ENCODE measurements at regions of chr15 and their contacts with region 1.

Region 1: DNA sequence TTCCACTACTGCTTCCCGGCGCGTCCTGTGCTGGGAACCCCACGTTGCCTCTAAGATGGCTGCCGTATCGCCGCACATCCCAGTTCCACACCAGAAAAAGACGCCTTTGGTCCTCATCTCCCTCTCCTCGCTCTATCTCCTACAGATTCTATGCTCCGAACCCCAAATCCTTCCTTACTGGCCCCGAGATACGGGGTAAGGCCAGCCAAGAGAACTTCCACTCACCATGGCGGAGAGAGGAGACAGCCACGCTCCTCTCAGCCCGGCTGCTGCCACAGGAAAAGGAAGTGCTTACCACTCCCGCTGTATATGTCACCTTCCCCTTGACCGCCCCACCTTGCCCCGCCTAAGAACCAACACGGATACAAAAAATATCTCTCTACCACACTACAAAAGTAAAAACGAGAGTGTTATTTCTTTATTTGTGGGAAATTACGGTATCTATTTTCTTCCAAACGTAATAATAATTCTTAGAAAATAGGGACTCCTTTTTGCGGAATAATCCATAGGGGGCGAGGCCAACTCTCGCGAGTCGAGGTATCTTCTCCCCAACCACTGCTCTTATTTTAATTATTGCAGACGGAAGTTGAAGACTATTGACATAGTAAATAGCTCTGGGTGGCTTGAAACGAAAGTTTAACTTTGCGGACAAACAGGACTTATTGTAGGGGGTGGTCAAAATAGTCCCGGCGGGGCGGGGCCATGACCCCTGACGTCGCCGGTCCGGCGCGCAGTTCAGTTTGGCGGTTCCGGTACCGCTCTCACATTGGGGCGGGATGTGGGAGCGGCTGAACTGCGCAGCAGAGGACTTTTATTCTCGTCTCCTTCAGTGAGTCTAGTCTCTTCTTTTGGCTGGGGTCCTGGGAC is at the starts of genes RPL4 and ZWILCH:
- DNase-seq: peak; percentile 93
- ATAC-seq: peak; percentile 85
- H3K4me3 ChIP-seq: peak within 1 kb of the TSS; percentile 81 to 99 (median 85)
- H3K4me3 Mint-ChIP-seq: peak within 1 kb of the TSS; percentile 99
- H3K27ac ChIP-seq: peak within 1 kb of the TSS; percentile 83 to 90
- H3K27ac Mint-ChIP-seq: peak within 1 kb of the TSS; percentile 98
- H3K4me1 ChIP-seq: peaks cover 21 to 26% of the 10 kb centered on the region in 2 donors
- H3K4me1 Mint-ChIP-seq: peaks cover 42% of the 10 kb centered on the region
- H3K27me3 ChIP-seq: no peaks in the 10 kb centered on the region
- H3K27me3 Mint-ChIP-seq: no peaks in the 10 kb centered on the region
- CTCF ChIP-seq: no peak
- total RNA-seq, gene RPL4: 2,389 and 2,546 TPM in 2 replicates
- total RNA-seq, gene ZWILCH: 11.3 and 12.6 TPM in 2 replicates

Region 2: GRCh38 chr15:66293419-66294156 is 211.2 kb before region 1 on chr15 and contains the start of gene DIS3L:
- CTCF ChIA-PET with region 1: interaction called, 5 read pairs
- POLR2A ChIA-PET with region 1: interaction called, 3 read pairs
- intact Hi-C with region 1: loop called (anchors 2 kb)
- DNase-seq: peak; percentile 84
- ATAC-seq: peak; percentile 80
- H3K4me3 ChIP-seq: peak within 1 kb of the TSS; percentile 50 to 90 (median 61)
- H3K4me3 Mint-ChIP-seq: peak within 1 kb of the TSS; percentile 89
- H3K27ac ChIP-seq: peak within 1 kb of the TSS; percentile 92 to 93
- H3K27ac Mint-ChIP-seq: peak within 1 kb of the TSS; percentile 93
- H3K4me1 ChIP-seq: peaks cover 20 to 26% of the 10 kb centered on the region in 2 donors
- H3K4me1 Mint-ChIP-seq: peaks cover 31% of the 10 kb centered on the region
- H3K27me3 ChIP-seq: no peaks in the 10 kb centered on the region
- H3K27me3 Mint-ChIP-seq: no peaks in the 10 kb centered on the region
- CTCF ChIP-seq: no peak
- total RNA-seq, gene DIS3L: 39.4 and 43.9 TPM in 2 replicates

Region 3: DNA sequence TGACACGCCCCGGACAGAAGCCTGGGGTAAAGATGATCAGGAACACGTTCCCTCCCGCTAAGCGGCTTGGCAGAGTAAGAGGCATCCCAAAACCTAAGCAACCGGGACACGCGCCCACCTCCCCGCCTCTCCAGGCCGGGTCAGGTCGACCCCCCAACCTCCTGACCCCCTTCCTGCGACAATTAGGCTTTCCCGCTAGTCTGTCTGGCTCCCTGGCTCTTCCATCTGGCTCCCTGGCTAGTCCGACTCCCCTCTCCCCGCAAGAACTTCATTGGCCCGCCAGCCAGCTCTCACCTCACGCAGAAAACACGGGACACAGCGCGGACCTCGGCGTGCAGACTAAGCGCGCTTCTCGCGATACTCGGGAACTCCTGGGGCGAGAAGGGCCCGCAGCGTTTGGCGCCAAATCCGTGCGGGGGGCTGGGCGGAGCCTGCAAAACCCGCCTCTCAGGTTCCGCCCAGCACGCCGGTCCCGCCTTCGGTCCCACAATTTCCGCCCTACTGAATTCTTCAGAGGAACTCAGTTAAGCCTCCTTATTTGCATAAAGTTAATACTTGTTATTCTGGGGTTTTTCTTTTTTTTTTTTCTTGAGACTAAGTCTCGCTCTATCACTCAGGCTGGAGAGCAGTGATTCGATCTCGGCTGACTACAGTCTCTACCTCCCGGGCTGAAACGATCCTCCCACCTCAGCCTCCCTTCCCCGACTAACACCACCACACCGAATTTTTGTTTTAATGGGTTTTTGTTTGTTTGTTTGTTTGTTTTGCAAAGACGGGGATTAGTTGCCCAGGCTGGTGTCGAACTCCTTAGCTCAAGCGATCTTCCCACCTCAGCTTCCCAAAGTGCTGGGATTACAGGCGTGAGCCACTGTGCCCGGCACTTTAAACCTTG is 148.2 kb before region 1 on chr15 and contains the start of gene TIPIN:
- CTCF ChIA-PET with region 1: no interaction called
- POLR2A ChIA-PET with region 1: interaction called, 3 read pairs
- intact Hi-C with region 1: loop called (anchors 1 kb)
- DNase-seq: peak; percentile 98
- ATAC-seq: peak; percentile 95
- H3K4me3 ChIP-seq: peak within 1 kb of the TSS; percentile 35 to 89 (median 84)
- H3K4me3 Mint-ChIP-seq: peak within 1 kb of the TSS; percentile 91
- H3K27ac ChIP-seq: peak within 1 kb of the TSS; percentile 58 to 71
- H3K27ac Mint-ChIP-seq: peak within 1 kb of the TSS; percentile 83
- H3K4me1 ChIP-seq: peaks cover 11 to 28% of the 10 kb centered on the region in 2 donors
- H3K4me1 Mint-ChIP-seq: peaks cover 24% of the 10 kb centered on the region
- H3K27me3 ChIP-seq: no peaks in the 10 kb centered on the region
- H3K27me3 Mint-ChIP-seq: no peaks in the 10 kb centered on the region
- CTCF ChIP-seq: no peak
- total RNA-seq, gene TIPIN: 8.8 and 8.9 TPM in 2 replicates

Region 4: GRCh38 chr15:66386204-66387123 is 118.3 kb before region 1 on chr15 and contains the start of gene MAP2K1:
- CTCF ChIA-PET with region 1: interaction called, 89 read pairs
- POLR2A ChIA-PET with region 1: no interaction called
- intact Hi-C with region 1: loop called (anchors 1 kb)
- DNase-seq: peak; percentile 98
- ATAC-seq: peak; percentile 91
- H3K4me3 ChIP-seq: peak within 1 kb of the TSS; percentile 59 to 78 (median 75)
- H3K4me3 Mint-ChIP-seq: peak within 1 kb of the TSS; percentile 92
- H3K27ac ChIP-seq: peak within 1 kb of the TSS; percentile 61 to 78
- H3K27ac Mint-ChIP-seq: peak within 1 kb of the TSS; percentile 94
- H3K4me1 ChIP-seq: peaks cover 47 to 50% of the 10 kb centered on the region in 2 donors
- H3K4me1 Mint-ChIP-seq: peaks cover 46% of the 10 kb centered on the region
- H3K27me3 ChIP-seq: no peaks in the 10 kb centered on the region
- H3K27me3 Mint-ChIP-seq: no peaks in the 10 kb centered on the region
- CTCF ChIP-seq: peak; percentile 80
- total RNA-seq, gene MAP2K1: 50.3 and 52.3 TPM in 2 replicates

Region 5: GRCh38 chr15:66459818-66460615 is 44.8 kb before region 1 on chr15:
- CTCF ChIA-PET with region 1: no interaction called
- POLR2A ChIA-PET with region 1: no interaction called
- intact Hi-C with region 1: no loop called
- DNase-seq: no peak
- ATAC-seq: no peak
- H3K4me3 ChIP-seq: no peak overlapping the region
- H3K4me3 Mint-ChIP-seq: no peak overlapping the region
- H3K27ac ChIP-seq: no peak overlapping the region
- H3K27ac Mint-ChIP-seq: no peak overlapping the region
- H3K4me1 ChIP-seq: no peaks in the 10 kb centered on the region
- H3K4me1 Mint-ChIP-seq: peaks cover 15% of the 10 kb centered on the region
- H3K27me3 ChIP-seq: no peaks in the 10 kb centered on the region
- H3K27me3 Mint-ChIP-seq: no peaks in the 10 kb centered on the region
- CTCF ChIP-seq: no peak

Region 6: GRCh38 chr15:66535016-66535415 is 30.2 kb after region 1 on chr15:
- CTCF ChIA-PET with region 1: no interaction called
- POLR2A ChIA-PET with region 1: no interaction called
- intact Hi-C with region 1: no loop called
- DNase-seq: no peak
- ATAC-seq: no peak
- H3K4me3 ChIP-seq: no peak overlapping the region
- H3K4me3 Mint-ChIP-seq: no peak overlapping the region
- H3K27ac ChIP-seq: no peak overlapping the region
- H3K27ac Mint-ChIP-seq: no peak overlapping the region
- H3K4me1 ChIP-seq: no peaks in the 10 kb centered on the region
- H3K4me1 Mint-ChIP-seq: no peaks in the 10 kb centered on the region
- H3K27me3 ChIP-seq: no peaks in the 10 kb centered on the region
- H3K27me3 Mint-ChIP-seq: no peaks in the 10 kb centered on the region
- CTCF ChIP-seq: no peak

Region 7: DNA sequence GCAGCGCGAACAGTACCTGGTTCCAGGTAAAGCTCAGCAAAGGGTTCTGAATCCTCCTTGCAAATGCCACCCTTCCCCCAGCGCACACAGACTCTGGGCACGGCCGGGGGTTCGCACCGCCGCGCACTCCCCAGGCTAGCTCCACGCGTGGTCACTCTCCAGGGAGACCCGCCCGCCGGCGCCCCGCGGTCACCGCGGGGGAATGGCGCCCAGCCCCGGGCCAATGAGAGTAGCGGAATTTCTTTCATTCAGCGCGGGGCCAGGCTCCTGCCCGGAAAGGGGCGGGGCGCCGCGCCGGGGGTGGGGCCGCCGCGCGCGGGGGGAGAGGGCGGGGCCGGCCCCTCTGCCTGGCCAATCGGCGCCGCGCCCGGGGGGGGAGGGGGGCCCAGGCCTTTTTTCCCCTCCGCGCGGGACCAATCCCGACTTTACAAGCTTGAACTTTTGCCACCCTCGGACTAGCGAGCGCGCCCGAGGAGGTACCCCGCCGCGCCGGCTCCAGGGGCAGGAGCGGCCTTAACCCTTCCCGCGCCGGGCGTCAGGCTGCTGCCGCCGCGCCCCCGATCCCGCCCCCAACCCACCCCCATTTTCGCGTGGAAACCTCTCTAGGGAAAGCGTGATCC is 196.1 kb after region 1 on chr15:
- CTCF ChIA-PET with region 1: no interaction called
- POLR2A ChIA-PET with region 1: no interaction called
- intact Hi-C with region 1: loop called (anchors 2 kb)
- DNase-seq: peak; percentile 88
- ATAC-seq: peak; percentile 84
- H3K4me3 ChIP-seq: peak overlapping the region; percentile 63 to 80 (median 77)
- H3K4me3 Mint-ChIP-seq: peak overlapping the region; percentile 94
- H3K27ac ChIP-seq: peak overlapping the region in 1 of 2 donors; percentile 47
- H3K27ac Mint-ChIP-seq: peak overlapping the region; percentile 85
- H3K4me1 ChIP-seq: peaks cover 17 to 27% of the 10 kb centered on the region in 2 donors
- H3K4me1 Mint-ChIP-seq: peaks cover 19% of the 10 kb centered on the region
- H3K27me3 ChIP-seq: peaks cover 0 to 34% (median 7%) of the 10 kb centered on the region in 4 experiments
- H3K27me3 Mint-ChIP-seq: peaks cover 17% of the 10 kb centered on the region
- CTCF ChIP-seq: no peak

Region 8: GRCh38 chr15:66862878-66863335 is 358.1 kb after region 1 on chr15:
- CTCF ChIA-PET with region 1: no interaction called
- POLR2A ChIA-PET with region 1: no interaction called
- intact Hi-C with region 1: loop called (anchors 2 kb)
- DNase-seq: peak; percentile 91
- ATAC-seq: peak; percentile 61
- H3K4me3 ChIP-seq: no peak overlapping the region
- H3K4me3 Mint-ChIP-seq: no peak overlapping the region
- H3K27ac ChIP-seq: peak overlapping the region; percentile 51 to 61
- H3K27ac Mint-ChIP-seq: peak overlapping the region; percentile 63
- H3K4me1 ChIP-seq: peaks cover 33 to 47% of the 10 kb centered on the region in 2 donors
- H3K4me1 Mint-ChIP-seq: peaks cover 49% of the 10 kb centered on the region
- H3K27me3 ChIP-seq: peaks cover 0 to 3% (median 0%) of the 10 kb centered on the region in 4 experiments
- H3K27me3 Mint-ChIP-seq: no peaks in the 10 kb centered on the region
- CTCF ChIP-seq: peak; percentile 89

Measured in B cell (primary cell).